ENCODE measurements at regions of chr3 and their contacts with region 1.

Region 1: DNA sequence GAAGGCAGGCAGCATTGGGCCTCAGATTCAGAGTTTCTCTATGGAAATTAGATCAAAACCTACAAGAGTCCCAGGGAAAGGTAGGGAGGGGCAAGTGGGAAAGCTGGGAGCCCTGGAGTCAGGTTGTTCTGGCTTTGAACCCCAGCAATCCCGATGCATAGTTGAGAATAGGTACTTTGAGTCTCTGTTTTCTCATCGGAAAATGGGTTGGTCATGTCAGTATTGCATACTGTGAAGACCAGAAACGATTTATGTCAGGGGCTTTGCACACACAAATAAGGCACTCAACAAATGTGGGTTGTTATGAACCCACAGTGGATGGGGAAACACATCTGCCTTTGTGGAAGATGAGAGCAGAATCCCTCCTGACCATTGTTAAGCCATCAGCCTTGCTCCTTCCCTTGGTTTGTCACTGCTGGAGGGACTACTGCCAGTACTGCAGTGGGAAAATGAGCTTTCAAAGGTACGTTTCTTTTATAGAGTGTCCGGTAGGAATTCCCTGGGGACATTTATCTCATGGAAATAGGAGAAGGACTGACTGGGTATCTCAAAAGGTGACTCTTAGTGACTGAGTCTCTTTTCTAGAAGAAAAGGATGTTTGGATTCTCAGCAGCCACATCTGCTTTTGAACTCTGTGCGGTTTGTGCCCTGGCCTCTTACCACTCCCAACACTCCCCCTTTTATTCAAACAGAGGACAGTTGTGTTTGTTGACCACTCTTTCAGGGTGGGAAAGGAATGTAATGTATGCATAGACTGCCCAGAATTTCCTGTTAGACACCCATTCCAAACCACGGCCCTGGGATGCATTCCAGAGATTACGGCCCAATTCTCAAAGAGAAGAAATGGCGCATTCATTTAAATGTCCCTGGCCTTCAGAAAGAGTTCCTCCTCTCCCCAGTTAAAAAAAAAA is 54.6 kb upstream of the VILL start:
- DNase-seq: peak; percentile 81 to 94
- H3K4me3 ChIP-seq: no peak overlapping the region; the same call in 1 of the 2 replicates
- H3K27ac ChIP-seq: peak overlapping the region; percentile 84
- H3K4me1 ChIP-seq: peaks cover 46% of the 10 kb centered on the region
- H3K27me3 ChIP-seq: no peaks in the 10 kb centered on the region
- CTCF ChIP-seq: no peak

Region 2: DNA sequence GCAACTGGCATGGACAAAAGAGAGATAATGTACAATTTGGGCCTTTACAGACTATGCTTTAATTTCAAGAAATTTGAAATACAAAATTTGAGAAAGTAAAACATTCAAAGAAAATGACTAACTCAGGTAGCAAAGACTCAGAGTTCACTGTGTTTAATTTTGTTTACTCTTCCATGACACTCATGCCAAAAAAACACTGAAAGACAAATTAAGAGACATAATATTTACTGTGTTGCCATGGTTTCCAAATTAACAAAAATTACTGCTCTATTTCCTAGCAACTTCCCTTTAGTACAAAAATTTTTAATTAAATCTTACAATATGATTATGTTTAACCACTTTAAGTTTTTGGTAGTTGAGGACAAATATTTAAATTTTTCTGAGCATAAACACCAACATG is 791.2 kb before region 1 on chr3:
- CTCF ChIA-PET with region 1: no interaction called
- POLR2A ChIA-PET with region 1: no interaction called
- intact Hi-C with region 1: no loop called
- DNase-seq: peak in 1 of 2 experiments; percentile 63
- H3K4me3 ChIP-seq: no peak overlapping the region
- H3K27ac ChIP-seq: 0 out of 2 replicates have a peak overlapping the region, but pooled peaks have one; percentile 6
- H3K4me1 ChIP-seq: peaks cover 11% of the 10 kb centered on the region; the same call in 1 of the 2 replicates
- H3K27me3 ChIP-seq: no peaks in the 10 kb centered on the region
- CTCF ChIP-seq: no peak

Region 3: DNA sequence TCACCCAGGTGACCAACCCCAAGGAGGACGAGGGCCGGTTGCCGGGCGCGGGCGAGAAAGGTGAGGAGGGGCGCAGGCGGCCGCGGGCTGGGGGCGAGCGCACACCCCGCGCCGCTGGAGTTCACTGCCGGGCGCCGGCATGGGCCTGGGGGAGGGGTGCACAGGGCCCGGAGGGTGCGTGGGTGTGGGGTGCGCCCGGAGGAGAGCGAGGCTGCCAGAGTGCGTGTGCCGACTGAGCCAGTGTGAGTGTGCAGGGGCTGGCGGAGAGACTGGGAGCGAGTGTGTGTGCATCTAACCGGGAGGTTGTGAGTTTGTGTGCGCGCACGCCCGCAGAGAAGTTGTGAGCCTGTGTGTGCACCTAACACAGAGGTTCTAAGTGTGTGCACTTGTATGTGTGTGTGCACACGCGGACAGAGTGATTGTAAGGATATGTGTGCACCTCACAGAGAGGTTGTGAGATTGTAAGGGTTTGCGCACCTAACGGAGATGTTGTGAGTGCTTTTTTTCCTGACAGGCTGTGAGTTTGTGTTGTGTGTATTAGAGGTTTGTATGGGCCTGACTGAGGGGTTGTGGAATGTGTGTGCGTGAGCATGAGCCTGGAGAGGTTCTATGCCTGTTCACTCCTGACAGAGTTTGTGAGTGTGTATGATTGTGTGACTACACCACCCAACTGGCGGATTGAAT is 73.7 kb before region 1 on chr3:
- CTCF ChIA-PET with region 1: no interaction called
- POLR2A ChIA-PET with region 1: no interaction called
- intact Hi-C with region 1: loop called (anchors 2 kb)
- DNase-seq: peak in 1 of 2 experiments; percentile 15
- H3K4me3 ChIP-seq: peak overlapping the region; percentile 87
- H3K27ac ChIP-seq: peak overlapping the region; percentile 66
- H3K4me1 ChIP-seq: peaks cover 38% of the 10 kb centered on the region
- H3K27me3 ChIP-seq: no peaks in the 10 kb centered on the region
- CTCF ChIP-seq: no peak

Region 4: GRCh38 chr3:37986479-37987314 is 50.7 kb after region 1 on chr3:
- CTCF ChIA-PET with region 1: interaction called, 6 read pairs
- POLR2A ChIA-PET with region 1: no interaction called
- intact Hi-C with region 1: loop called (anchors 2 kb)
- DNase-seq: peak; percentile 89 to 94
- H3K4me3 ChIP-seq: no peak overlapping the region
- H3K27ac ChIP-seq: peak overlapping the region; percentile 56
- H3K4me1 ChIP-seq: peaks cover 57% of the 10 kb centered on the region
- H3K27me3 ChIP-seq: no peaks in the 10 kb centered on the region
- CTCF ChIP-seq: no peak

Region 5: DNA sequence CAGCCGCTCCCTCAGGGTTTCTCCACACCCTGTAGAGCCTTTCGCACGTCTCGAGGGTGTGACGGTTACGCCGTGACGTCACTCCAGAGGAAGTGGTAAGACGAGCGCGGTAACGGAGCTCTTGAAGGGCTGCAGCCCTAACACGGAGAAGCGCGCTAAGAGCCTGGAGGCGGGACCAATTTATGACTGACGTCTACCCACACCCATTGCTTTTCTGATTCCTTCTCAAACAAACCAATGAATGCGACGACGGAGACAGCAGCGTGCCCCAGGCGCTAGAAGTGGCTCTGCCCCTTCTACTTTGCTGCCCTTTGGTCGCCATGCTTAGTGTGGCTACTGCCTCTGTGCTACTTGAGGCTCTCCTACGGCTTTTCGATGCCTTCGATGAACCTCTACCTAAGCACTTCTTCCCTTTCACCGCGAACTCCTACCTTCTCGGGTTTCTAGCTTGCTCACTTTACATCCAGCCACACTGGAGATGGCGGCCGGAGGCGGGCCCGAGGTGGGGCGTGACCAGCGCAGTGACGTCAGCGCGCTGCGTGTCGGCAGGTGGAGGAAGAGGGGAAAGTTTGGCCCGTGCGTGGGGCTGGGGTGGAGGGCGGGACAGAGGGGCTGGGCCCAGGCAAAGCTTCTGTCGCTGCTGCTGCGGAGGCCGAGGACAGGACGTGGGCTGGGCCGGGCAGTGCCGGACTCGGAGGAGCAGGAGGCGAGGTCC is 229.1 kb after region 1 on chr3 and contains the start of gene OXSR1:
- CTCF ChIA-PET with region 1: no interaction called
- POLR2A ChIA-PET with region 1: no interaction called
- intact Hi-C with region 1: loop called (anchors 2 kb)
- DNase-seq: peak; percentile 99
- H3K4me3 ChIP-seq: peak within 1 kb of the TSS; percentile 74
- H3K27ac ChIP-seq: peak within 1 kb of the TSS; percentile 96
- H3K4me1 ChIP-seq: peaks cover 38% of the 10 kb centered on the region
- H3K27me3 ChIP-seq: no peaks in the 10 kb centered on the region
- CTCF ChIP-seq: no peak
- total RNA-seq, gene OXSR1: 50.2 and 54.3 TPM in 2 replicates

Region 6: GRCh38 chr3:38354588-38355330 is 418.7 kb after region 1 on chr3:
- CTCF ChIA-PET with region 1: no interaction called
- POLR2A ChIA-PET with region 1: interaction called, 12 read pairs
- intact Hi-C with region 1: no loop called
- DNase-seq: no peak
- H3K4me3 ChIP-seq: no peak overlapping the region
- H3K27ac ChIP-seq: no peak overlapping the region
- H3K4me1 ChIP-seq: no peaks in the 10 kb centered on the region
- H3K27me3 ChIP-seq: no peaks in the 10 kb centered on the region
- CTCF ChIP-seq: no peak